ENCODE measurements at regions of chr19 and their contacts with region 1.

Region 1: DNA sequence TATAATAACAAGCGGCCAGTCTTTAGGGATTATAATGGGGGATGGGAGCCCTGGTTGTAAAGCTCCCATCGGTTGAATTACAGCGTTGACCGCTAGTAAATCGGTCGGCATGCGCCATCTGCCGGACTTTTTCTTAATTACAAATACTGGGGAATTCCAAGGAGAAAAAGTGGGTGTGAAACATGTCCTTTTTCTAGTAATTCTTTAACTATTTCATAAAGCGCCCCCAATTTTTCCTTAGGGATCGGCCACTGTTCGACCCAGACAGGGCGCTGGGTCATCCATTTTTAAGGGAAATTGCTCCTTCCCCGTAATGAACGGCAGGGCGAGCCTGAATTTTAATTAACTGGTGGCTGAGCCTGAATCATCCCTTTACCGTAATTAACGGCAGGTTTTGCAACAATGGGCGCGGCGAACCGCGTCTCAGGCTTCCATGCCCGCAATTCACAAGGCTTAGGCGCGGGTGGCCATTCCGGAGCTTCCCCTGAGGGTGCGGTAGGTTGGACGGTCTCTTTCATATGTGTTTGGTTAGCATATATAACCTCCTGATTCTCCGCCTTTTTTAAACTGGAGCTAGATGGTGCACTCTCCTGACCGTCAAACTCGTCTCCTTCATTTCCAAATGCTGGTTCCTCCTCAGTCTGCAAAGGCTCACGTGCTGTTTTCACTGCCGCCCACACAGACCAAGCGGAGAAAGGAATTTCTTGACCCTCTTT is 30.2 kb upstream of the EVI5L start:
- DNase-seq: peak; percentile 62
- CTCF ChIP-seq: peak; percentile 37

Region 2: GRCh38 chr19:7636691-7637373 is 163.0 kb before region 1 on chr19 and contains the start of gene STXBP2:
- CTCF ChIA-PET with region 1: interaction called, 11 read pairs
- POLR2A ChIA-PET with region 1: no interaction called
- DNase-seq: peak; percentile 99
- CTCF ChIP-seq: no peak

Region 3: DNA sequence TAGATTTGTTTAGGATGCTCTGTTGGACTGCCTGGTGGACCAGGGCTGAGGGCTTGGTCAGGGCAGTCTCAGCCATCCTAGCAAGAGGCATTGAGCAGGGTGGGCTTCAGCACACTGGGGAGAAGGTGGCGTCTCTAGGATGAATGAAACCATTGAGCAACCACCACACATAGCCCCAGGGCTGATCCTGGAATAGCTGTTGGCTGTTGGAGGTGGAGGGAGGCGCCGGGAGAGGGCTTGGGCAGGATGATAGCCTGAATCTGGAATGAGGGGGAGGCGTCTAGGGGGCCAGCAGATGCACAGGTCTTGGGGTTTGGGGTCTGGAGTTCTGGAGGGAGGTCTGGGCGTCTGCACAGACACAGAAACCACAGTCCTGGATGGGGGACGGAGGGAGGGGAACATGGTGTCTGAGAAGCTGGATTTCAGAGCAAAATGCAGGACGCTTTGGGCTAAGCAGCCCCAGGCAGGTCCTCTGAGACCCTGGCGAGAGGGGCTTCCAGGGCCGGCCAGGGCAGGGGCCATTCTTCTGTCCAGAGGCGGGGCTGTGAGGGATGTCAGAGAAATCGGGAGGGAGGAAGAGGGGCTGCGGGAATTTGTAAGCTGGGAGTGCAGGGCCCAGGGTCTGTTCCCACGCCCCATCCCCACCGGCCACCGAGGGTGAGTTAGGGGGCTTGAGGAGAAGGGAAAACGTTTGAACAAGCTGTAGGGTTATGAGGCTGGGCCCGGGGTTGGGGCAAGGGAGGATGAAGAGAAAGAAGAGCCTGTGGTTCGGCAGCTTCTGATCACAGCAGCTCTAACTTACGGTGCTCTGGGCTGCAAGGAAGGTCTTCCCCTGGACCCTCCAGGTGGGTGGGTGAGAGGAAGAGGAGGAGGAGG is 114.0 kb before region 1 on chr19:
- CTCF ChIA-PET with region 1: interaction called, 16 read pairs
- POLR2A ChIA-PET with region 1: no interaction called
- DNase-seq: no peak
- CTCF ChIP-seq: no peak

Region 4: GRCh38 chr19:7715671-7716070 is 84.1 kb before region 1 on chr19:
- CTCF ChIA-PET with region 1: no interaction called
- POLR2A ChIA-PET with region 1: no interaction called
- DNase-seq: no peak
- CTCF ChIP-seq: no peak

Region 5: DNA sequence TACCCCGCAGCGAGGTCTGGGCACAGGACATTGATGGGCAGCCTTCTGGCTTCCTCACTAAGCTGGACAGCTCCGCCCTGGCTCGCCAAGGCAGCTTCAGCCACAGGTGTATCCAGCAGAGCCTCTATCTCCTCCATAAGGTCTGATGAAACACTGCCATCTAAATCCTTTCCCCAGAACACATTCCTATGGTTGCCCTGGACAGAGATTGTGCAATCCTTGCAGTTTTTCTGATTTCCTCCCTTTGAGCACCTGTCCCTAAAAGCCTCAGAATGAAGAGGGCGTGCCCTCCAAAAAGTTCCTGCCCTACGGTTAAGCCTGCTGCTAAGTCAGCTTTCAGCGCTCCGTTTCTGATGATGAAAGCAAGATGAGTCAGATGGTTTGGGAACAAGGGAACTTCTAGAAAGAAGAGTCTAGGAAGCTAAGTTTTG is 15.8 kb before region 1 on chr19:
- CTCF ChIA-PET with region 1: interaction called, 12 read pairs
- POLR2A ChIA-PET with region 1: no interaction called
- DNase-seq: no peak
- CTCF ChIP-seq: no peak

Region 6: GRCh38 chr19:7820588-7820987 is 20.8 kb after region 1 on chr19:
- CTCF ChIA-PET with region 1: interaction called, 31 read pairs
- POLR2A ChIA-PET with region 1: no interaction called
- DNase-seq: no peak
- CTCF ChIP-seq: no peak

Measured in GM10248 (cell line).